ENCODE measurements at regions of chr3 and their contacts with region 1.

Region 1: DNA sequence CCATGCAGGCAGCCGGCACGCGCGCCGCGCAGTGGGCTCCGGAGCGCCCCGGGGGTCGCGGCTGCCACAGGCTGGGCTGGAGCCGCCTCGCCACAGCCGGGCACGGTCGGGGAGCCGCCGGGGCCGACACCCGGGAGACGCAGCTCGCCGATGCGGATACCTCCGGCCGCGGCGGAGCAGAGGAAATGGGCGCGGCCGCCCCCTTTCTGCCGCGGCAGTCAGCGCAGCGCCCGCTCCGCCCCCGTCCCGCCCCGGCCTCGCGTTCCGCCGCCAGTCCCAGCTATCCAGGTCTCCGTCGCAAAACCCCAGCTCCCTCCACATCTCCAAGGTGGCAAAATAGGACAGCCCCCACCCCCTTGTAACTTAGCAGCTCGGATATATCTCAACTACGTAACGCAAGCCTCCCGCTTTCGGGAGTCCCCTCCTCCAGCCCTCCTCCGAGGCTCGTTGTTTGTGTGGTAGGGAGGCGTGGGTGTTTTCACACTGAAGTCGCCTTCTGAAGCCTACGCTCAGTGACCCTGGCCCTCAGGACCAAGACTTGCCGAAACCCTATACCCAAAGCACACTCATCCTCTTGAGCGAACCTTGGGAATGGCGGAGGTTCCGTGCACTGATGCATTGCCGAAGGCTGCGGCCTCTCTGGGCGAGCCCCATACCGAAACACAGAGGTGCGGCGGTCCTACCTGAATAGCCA is at the start of gene SH3BP5:
- DNase-seq: peak; percentile 73
- ATAC-seq: peak; percentile 90
- H3K4me3 Mint-ChIP-seq: peak within 1 kb of the TSS; percentile 76
- H3K27ac Mint-ChIP-seq: peak within 1 kb of the TSS; percentile 70
- H3K4me1 Mint-ChIP-seq: peaks cover 44% of the 10 kb centered on the region
- H3K27me3 Mint-ChIP-seq: peaks cover 6% of the 10 kb centered on the region
- CTCF ChIP-seq: peak; percentile 79
- total RNA-seq, gene SH3BP5: 2.0 to 2.4 TPM

Region 2: GRCh38 chr3:15291589-15292541 is 40.7 kb before region 1 on chr3:
- CTCF ChIA-PET with region 1: interaction called, 13 read pairs
- POLR2A ChIA-PET with region 1: no interaction called
- intact Hi-C with region 1: no loop called
- DNase-seq: peak; percentile 85
- ATAC-seq: peak; percentile 89
- H3K4me3 Mint-ChIP-seq: peak overlapping the region; percentile 31
- H3K27ac Mint-ChIP-seq: peak overlapping the region; percentile 70
- H3K4me1 Mint-ChIP-seq: peaks cover 38% of the 10 kb centered on the region
- H3K27me3 Mint-ChIP-seq: no peaks in the 10 kb centered on the region
- CTCF ChIP-seq: no peak

Region 3: GRCh38 chr3:15309662-15310335 is 22.8 kb before region 1 on chr3:
- CTCF ChIA-PET with region 1: interaction called, 38 read pairs
- POLR2A ChIA-PET with region 1: no interaction called
- intact Hi-C with region 1: no loop called
- DNase-seq: peak; percentile 41
- ATAC-seq: peak; percentile 25
- H3K4me3 Mint-ChIP-seq: no peak overlapping the region
- H3K27ac Mint-ChIP-seq: peak overlapping the region; percentile 75
- H3K4me1 Mint-ChIP-seq: peaks cover 46% of the 10 kb centered on the region
- H3K27me3 Mint-ChIP-seq: no peaks in the 10 kb centered on the region
- CTCF ChIP-seq: no peak

Region 4: GRCh38 chr3:15319575-15319974 is 13.0 kb before region 1 on chr3:
- CTCF ChIA-PET with region 1: interaction called, 28 read pairs
- POLR2A ChIA-PET with region 1: interaction called, 10 read pairs
- intact Hi-C with region 1: no loop called
- DNase-seq: no peak
- ATAC-seq: no peak
- H3K4me3 Mint-ChIP-seq: no peak overlapping the region
- H3K27ac Mint-ChIP-seq: no peak overlapping the region
- H3K4me1 Mint-ChIP-seq: peaks cover 39% of the 10 kb centered on the region
- H3K27me3 Mint-ChIP-seq: no peaks in the 10 kb centered on the region
- CTCF ChIP-seq: no peak

Region 5: GRCh38 chr3:15361494-15362212 is 29.1 kb after region 1 on chr3:
- CTCF ChIA-PET with region 1: interaction called, 7 read pairs
- POLR2A ChIA-PET with region 1: interaction called, 4 read pairs
- intact Hi-C with region 1: loop called (anchors 2 kb)
- DNase-seq: peak; percentile 81
- ATAC-seq: peak; percentile 85
- H3K4me3 Mint-ChIP-seq: no peak overlapping the region
- H3K27ac Mint-ChIP-seq: no peak overlapping the region
- H3K4me1 Mint-ChIP-seq: peaks cover 32% of the 10 kb centered on the region
- H3K27me3 Mint-ChIP-seq: peaks cover 6% of the 10 kb centered on the region
- CTCF ChIP-seq: no peak

Region 6: GRCh38 chr3:15377961-15378791 is 45.6 kb after region 1 on chr3:
- CTCF ChIA-PET with region 1: interaction called, 16 read pairs
- POLR2A ChIA-PET with region 1: interaction called, 4 read pairs
- intact Hi-C with region 1: no loop called
- DNase-seq: peak; percentile 97
- ATAC-seq: peak; percentile 95
- H3K4me3 Mint-ChIP-seq: no peak overlapping the region
- H3K27ac Mint-ChIP-seq: peak overlapping the region; percentile 77
- H3K4me1 Mint-ChIP-seq: peaks cover 6% of the 10 kb centered on the region
- H3K27me3 Mint-ChIP-seq: no peaks in the 10 kb centered on the region
- CTCF ChIP-seq: peak; percentile 91

Measured in activated CD8-positive, alpha-beta T cell treated with anti-CD3 and anti-CD28 coated beads for 36 hours (primary cell).